Posterior vena cava (tissue), 2 donors: ENCODE measurements at regions of chr7 and their contacts with region 1.

Region 1: GRCh38 chr7:99261646-99262045 is 11.0 kb upstream of the MYH16 start:
- DNase-seq: no peak

Region 2: DNA sequence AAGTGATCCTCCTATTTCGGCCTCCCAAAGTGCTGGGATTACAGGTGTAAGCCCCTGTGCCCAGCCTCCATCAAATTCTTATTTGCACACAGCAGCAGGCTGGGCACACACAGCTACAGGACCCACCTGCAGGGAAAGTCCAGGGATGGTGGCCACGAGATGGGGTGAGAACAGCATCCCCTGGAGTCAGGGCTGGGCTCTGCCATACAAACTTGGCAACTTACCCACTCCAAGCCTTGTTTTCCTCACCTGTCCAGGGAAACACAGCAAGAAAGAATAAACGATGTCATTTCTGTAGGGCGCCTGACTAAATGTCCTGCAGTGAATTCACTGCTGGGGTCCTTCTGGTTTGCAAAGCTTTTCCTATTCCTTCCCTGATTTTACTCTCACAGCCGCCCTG is 16.5 kb after region 1 on chr7:
- intact Hi-C with region 1: loop called in 1 of 2 experiments (anchors 2 kb)
- DNase-seq: no peak

Region 3: GRCh38 chr7:99893280-99893679 is 631.6 kb after region 1 on chr7:
- intact Hi-C with region 1: no loop called
- DNase-seq: no peak

Region 4: DNA sequence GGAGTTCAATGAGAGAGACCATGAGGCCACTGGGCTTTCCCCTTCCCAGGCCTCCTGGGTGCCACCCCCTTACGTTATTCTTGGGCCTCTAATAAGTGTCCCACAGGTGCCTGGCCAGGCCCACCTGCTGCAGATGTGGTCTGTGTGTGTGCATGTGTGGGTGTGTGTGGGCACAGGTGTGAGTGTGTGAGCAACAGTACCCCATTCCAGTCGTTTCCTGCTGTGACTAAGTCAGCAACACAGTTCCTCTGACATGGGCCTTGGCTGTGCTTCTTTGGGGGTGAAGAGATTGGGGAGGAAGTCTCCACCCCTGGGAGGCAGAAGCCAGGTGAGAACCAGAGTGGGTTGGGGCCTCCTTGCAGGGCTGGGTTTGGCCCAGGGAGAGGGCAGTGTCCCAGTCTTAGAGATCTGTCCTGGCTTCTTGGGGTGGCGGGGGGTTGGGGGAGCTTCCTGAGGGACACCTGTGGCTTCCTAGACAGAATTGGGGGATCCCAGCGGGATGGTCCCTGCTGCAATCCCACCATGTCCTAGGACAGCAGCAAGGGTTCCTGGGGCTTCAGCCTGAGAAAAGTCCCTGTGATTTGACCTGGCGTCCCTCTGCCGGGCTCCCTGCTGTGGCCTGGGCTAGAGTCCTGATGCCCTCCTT is 1092.2 kb after region 1 on chr7:
- intact Hi-C with region 1: loop called in 1 of 2 experiments (anchors 5 kb)
- DNase-seq: no peak